Ascending aorta (tissue), 2 donors: ENCODE measurements at regions of chr2 and their contacts with region 1.

Region 1: GRCh38 chr2:189287982-189288521 is 108.5 kb upstream of the COL5A2 start:
- DNase-seq: no peak
- H3K4me3 ChIP-seq: no peak overlapping the region
- H3K27ac ChIP-seq: no peak overlapping the region
- H3K4me1 ChIP-seq: peaks cover 2 to 11% of the 10 kb centered on the region in 2 donors
- H3K27me3 ChIP-seq: no peaks in the 10 kb centered on the region
- CTCF ChIP-seq: peak; percentile 29 to 66 (median 52)

Region 2: DNA sequence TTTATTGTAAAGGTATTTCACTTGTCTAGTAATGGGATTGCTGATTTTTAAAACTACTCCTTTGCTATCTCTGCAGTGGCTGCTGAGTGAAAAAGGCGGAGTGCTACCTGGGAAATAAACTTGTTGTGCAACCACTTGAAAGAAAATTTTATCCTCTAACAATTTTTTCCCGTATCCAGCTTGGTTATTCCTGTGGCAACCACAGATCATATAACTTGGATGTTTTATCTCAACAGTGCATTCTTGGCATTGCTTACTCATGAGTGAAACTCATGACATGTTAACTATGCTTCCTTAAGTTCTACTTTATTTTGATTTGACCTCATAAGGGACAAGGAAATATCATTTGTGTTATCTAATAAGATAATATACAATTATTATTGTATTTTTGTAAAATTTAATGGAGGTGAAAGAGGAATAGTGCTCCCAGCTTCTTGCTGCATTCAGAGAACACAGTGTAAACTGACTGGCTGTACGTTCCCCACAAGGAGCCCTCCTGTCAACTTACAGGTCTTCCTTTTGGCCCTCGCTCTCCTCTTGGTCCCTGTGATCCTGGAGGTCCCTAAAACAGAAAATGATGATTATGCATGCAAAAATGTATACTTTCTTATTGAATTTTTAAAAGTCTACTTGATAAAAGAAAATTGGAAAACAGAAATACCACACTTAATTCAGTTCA is 191.1 kb before region 1 on chr2:
- intact Hi-C with region 1: loop called (anchors 1 kb)
- DNase-seq: no peak
- H3K4me3 ChIP-seq: no peak overlapping the region
- H3K27ac ChIP-seq: no peak overlapping the region
- H3K4me1 ChIP-seq: peaks cover 0 to 19% of the 10 kb centered on the region in 2 donors
- H3K27me3 ChIP-seq: no peaks in the 10 kb centered on the region
- CTCF ChIP-seq: no peak

Region 3: GRCh38 chr2:189115126-189115525 is 172.9 kb before region 1 on chr2:
- intact Hi-C with region 1: loop called (anchors 5 kb)
- DNase-seq: no peak
- H3K4me3 ChIP-seq: peak overlapping the region in 1 of 2 donors; percentile 23
- H3K27ac ChIP-seq: no peak overlapping the region
- H3K4me1 ChIP-seq: peaks cover 0 to 26% of the 10 kb centered on the region in 2 donors
- H3K27me3 ChIP-seq: no peaks in the 10 kb centered on the region
- CTCF ChIP-seq: peak in 2 of 3 experiments; percentile 16 to 32

Region 4: GRCh38 chr2:189125195-189125594 is 162.9 kb before region 1 on chr2:
- intact Hi-C with region 1: no loop called
- DNase-seq: no peak
- H3K4me3 ChIP-seq: no peak overlapping the region
- H3K27ac ChIP-seq: no peak overlapping the region
- H3K4me1 ChIP-seq: peaks cover 0 to 13% of the 10 kb centered on the region in 2 donors
- H3K27me3 ChIP-seq: no peaks in the 10 kb centered on the region
- CTCF ChIP-seq: no peak

Region 5: GRCh38 chr2:189179570-189179950 is 108.5 kb before region 1 on chr2 and contains the start of gene COL5A2:
- intact Hi-C with region 1: loop called (anchors 2 kb)
- DNase-seq: peak in 1 of 2 donors; percentile 79
- H3K4me3 ChIP-seq: peak within 1 kb of the TSS; percentile 54 to 87
- H3K27ac ChIP-seq: peak within 1 kb of the TSS; percentile 74 to 84
- H3K4me1 ChIP-seq: peaks cover 0 to 3% of the 10 kb centered on the region in 2 donors
- H3K27me3 ChIP-seq: no peaks in the 10 kb centered on the region
- CTCF ChIP-seq: no peak
- total RNA-seq, gene COL5A2: 64.2 TPM

Region 6: GRCh38 chr2:189210250-189211075 is 77.6 kb before region 1 on chr2:
- intact Hi-C with region 1: loop called (anchors 5 kb)
- DNase-seq: peak in 1 of 2 donors; percentile 86
- H3K4me3 ChIP-seq: peak overlapping the region; percentile 35 to 50
- H3K27ac ChIP-seq: peak overlapping the region; percentile 81 to 89
- H3K4me1 ChIP-seq: peaks cover 0 to 21% of the 10 kb centered on the region in 2 donors
- H3K27me3 ChIP-seq: no peaks in the 10 kb centered on the region
- CTCF ChIP-seq: no peak

Region 7: DNA sequence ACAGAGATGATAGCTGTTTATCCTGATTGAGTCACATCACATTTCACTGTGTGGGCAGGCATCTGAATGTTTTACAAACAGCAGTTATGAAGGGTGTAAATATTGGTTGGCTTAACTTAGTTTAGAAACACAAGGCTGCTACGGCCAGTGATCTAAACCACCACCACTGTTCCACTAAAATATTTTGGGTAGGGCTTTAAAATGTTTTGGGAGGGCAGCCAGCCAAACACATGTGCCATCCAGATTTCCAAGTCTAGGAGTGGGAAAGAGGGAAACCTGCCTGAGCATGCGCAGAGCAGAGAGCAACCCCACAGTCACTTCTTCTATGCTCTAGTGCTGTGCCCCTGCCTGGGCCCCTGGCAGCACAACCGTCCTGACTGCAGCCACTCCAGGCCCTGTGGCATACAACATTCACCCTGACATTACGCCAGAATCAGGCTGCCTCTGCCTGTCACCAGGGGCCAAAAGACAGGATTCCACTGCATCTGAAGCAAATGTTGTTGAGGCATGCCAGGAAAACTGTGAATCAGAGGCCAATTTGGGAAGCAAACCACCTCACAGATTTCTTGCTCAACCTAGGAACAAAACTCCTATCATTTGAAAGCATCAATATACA is 33.7 kb before region 1 on chr2:
- intact Hi-C with region 1: loop called (anchors 5 kb)
- DNase-seq: peak; percentile 8 to 88
- H3K4me3 ChIP-seq: peak overlapping the region in 1 of 2 donors; percentile 5
- H3K27ac ChIP-seq: peak overlapping the region; percentile 51 to 75
- H3K4me1 ChIP-seq: peaks cover 4 to 24% of the 10 kb centered on the region in 2 donors
- H3K27me3 ChIP-seq: no peaks in the 10 kb centered on the region
- CTCF ChIP-seq: no peak

Region 8: DNA sequence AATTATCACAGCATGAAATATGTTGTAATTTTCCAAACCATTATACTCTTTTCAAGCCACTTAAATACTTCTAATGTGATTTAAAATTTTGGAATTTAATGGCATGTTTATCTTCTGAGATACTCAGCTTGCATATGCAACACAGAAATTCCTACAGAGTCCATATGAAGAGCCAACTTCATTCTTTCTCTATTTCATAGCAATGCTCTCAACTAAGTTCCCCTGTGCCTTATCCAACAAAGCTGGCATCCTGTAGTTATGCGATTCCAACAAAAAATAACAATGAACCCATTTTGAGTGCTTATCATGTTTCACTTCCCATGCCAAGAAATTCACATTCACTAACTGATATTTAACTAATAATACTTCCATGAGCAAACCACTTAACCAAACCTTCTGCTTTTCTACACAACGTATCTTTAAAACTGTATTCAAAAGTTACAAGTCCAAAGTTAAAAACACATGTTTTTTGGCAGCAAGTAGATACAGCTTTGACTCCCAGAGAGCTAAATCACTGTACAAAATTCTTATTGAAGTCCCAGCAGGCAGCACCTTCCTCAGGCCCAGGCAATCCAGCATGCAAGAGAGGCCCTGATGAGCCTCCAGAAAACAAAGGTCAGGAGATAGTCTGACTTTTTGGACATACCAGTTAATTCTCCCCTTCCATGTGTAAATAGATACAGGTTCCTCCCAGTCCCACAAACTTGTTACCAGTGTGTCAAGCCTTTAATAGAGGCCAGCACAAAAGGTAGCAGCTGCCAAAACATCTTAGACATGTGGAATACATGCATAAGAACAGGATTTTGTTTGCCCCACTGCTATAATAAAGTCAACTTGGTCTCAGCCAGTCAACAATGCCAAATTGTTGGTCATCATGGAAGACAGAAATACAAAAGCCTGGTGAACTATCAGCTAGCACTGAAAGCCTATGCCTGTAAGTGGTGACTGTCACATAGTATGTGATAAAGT is 40.1 kb after region 1 on chr2:
- intact Hi-C with region 1: no loop called
- DNase-seq: no peak
- H3K4me3 ChIP-seq: no peak overlapping the region
- H3K27ac ChIP-seq: peak overlapping the region; percentile 28 to 61
- H3K4me1 ChIP-seq: peaks cover 0 to 9% of the 10 kb centered on the region in 2 donors
- H3K27me3 ChIP-seq: no peaks in the 10 kb centered on the region
- CTCF ChIP-seq: no peak